ENCODE measurements at regions of chr2 and their contacts with region 1.

Region 1: GRCh38 chr2:211437396-211437795 is 881.0 kb downstream of the CPS1 start:
- DNase-seq: no peak
- ATAC-seq: no peak
- H3K4me3 ChIP-seq: no peak overlapping the region
- H3K27ac ChIP-seq: no peak overlapping the region
- H3K4me1 ChIP-seq: no peaks in the 10 kb centered on the region
- H3K27me3 ChIP-seq: no peaks in the 10 kb centered on the region
- CTCF ChIP-seq: no peak
- EP300 ChIP-seq: no peak
- POLR2A ChIP-seq: no peak
- RAD21 ChIP-seq: no peak

Region 2: GRCh38 chr2:211423030-211423429 is 14.4 kb before region 1 on chr2:
- CTCF ChIA-PET with region 1: no interaction called
- POLR2A ChIA-PET with region 1: no interaction called
- RAD21 ChIA-PET with region 1: no interaction called
- SMC1A ChIA-PET with region 1: no interaction called
- in situ Hi-C with region 1: no loop called
- intact Hi-C with region 1: no loop called
- DNase-seq: no peak
- ATAC-seq: no peak
- H3K4me3 ChIP-seq: no peak overlapping the region
- H3K27ac ChIP-seq: no peak overlapping the region
- H3K4me1 ChIP-seq: no peaks in the 10 kb centered on the region
- H3K27me3 ChIP-seq: no peaks in the 10 kb centered on the region
- CTCF ChIP-seq: no peak
- EP300 ChIP-seq: no peak
- POLR2A ChIP-seq: no peak
- RAD21 ChIP-seq: no peak

Region 3: GRCh38 chr2:211455216-211455841 is 17.9 kb after region 1 on chr2:
- CTCF ChIA-PET with region 1: interaction called, 22 read pairs
- POLR2A ChIA-PET with region 1: no interaction called
- RAD21 ChIA-PET with region 1: no interaction called
- SMC1A ChIA-PET with region 1: interaction called, 6 read pairs
- in situ Hi-C with region 1: no loop called
- intact Hi-C with region 1: no loop called
- DNase-seq: no peak
- ATAC-seq: peak; percentile 79
- H3K4me3 ChIP-seq: no peak overlapping the region
- H3K27ac ChIP-seq: no peak overlapping the region
- H3K4me1 ChIP-seq: no peaks in the 10 kb centered on the region
- H3K27me3 ChIP-seq: no peaks in the 10 kb centered on the region; a peak in 1 of 4 replicates
- CTCF ChIP-seq: peak; percentile 79 to 94 (median 84)
- EP300 ChIP-seq: no peak
- POLR2A ChIP-seq: no peak
- RAD21 ChIP-seq: peak; percentile 52

Region 4: DNA sequence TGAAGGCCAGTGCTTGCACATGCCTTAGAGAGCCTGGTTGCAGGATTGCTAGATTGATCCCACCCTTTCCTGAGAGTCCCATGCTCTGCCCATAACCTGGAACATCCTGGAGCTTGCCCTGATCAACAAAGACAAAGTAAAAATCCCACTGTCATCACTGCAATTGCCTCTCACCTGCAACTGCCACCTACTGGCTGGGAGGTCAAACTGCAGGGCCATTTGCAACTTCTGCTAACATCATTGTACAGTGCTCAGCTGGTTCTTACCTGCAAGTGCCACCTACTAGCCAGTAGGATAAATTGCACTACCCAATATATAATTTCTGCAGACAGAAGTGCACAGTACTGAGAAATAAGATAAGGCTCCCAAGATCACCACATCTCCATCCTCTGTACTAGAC is 66.5 kb after region 1 on chr2:
- CTCF ChIA-PET with region 1: no interaction called
- POLR2A ChIA-PET with region 1: no interaction called
- RAD21 ChIA-PET with region 1: no interaction called
- SMC1A ChIA-PET with region 1: no interaction called
- in situ Hi-C with region 1: no loop called
- intact Hi-C with region 1: no loop called
- DNase-seq: no peak
- ATAC-seq: peak; percentile 80
- H3K4me3 ChIP-seq: no peak overlapping the region
- H3K27ac ChIP-seq: no peak overlapping the region
- H3K4me1 ChIP-seq: no peaks in the 10 kb centered on the region
- H3K27me3 ChIP-seq: no peaks in the 10 kb centered on the region
- CTCF ChIP-seq: peak; percentile 26 to 42 (median 32); a peak in 3 of 6 replicates
- EP300 ChIP-seq: no peak
- POLR2A ChIP-seq: no peak
- RAD21 ChIP-seq: no peak

Measured in GM12878 (cell line).